ENCODE measurements at regions of chr15 and their contacts with region 1.

Region 1: DNA sequence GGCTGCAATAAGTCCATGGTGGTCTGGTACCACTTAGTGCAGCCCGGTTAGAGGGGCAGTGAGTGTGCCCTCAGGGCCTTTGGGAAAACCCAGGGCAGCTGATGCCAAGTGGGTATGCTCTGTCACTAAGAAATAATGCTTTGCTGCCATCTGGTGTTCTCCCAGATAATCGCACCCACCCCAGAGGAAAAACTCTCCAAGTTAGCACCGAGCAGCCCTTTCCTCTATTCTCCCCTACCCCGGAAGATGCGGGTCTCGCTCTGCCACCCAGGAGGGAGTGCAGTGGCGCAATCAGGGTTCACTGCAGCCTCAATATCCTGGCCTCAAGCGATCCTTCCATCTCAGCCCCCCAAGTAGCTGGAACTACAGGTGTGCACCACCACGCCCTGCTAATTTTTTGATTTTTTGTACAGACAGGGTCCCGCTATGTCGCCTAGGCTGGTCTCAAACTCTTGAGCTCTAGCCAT is 21.3 kb upstream of the DAPK2 start:
- DNase-seq: peak; percentile 64
- H3K4me3 ChIP-seq: no peak overlapping the region
- H3K27ac ChIP-seq: no peak overlapping the region
- H3K4me1 ChIP-seq: peaks cover 17% of the 10 kb centered on the region
- H3K27me3 ChIP-seq: no peaks in the 10 kb centered on the region
- CTCF ChIP-seq: peak; percentile 63 to 81
- POLR2A ChIP-seq: no peak

Region 2: GRCh38 chr15:63610200-63610841 is 457.3 kb before region 1 on chr15:
- CTCF ChIA-PET with region 1: interaction called, 72 read pairs
- POLR2A ChIA-PET with region 1: no interaction called
- dilution Hi-C with region 1: no loop called
- intact Hi-C with region 1: loop called (anchors 1 kb)
- DNase-seq: peak; percentile 85
- H3K4me3 ChIP-seq: no peak overlapping the region
- H3K27ac ChIP-seq: peak overlapping the region; percentile 18
- H3K4me1 ChIP-seq: peaks cover 18% of the 10 kb centered on the region
- H3K27me3 ChIP-seq: no peaks in the 10 kb centered on the region
- CTCF ChIP-seq: peak; percentile 70 to 73
- POLR2A ChIP-seq: no peak

Region 3: GRCh38 chr15:63638839-63639238 is 428.8 kb before region 1 on chr15:
- CTCF ChIA-PET with region 1: no interaction called
- POLR2A ChIA-PET with region 1: no interaction called
- dilution Hi-C with region 1: no loop called
- intact Hi-C with region 1: no loop called
- DNase-seq: no peak
- H3K4me3 ChIP-seq: no peak overlapping the region
- H3K27ac ChIP-seq: no peak overlapping the region
- H3K4me1 ChIP-seq: peaks cover 4% of the 10 kb centered on the region
- H3K27me3 ChIP-seq: no peaks in the 10 kb centered on the region
- CTCF ChIP-seq: no peak
- POLR2A ChIP-seq: no peak

Region 4: GRCh38 chr15:63818191-63818590 is 249.4 kb before region 1 on chr15:
- CTCF ChIA-PET with region 1: interaction called, 15 read pairs
- POLR2A ChIA-PET with region 1: no interaction called
- dilution Hi-C with region 1: no loop called
- intact Hi-C with region 1: no loop called
- DNase-seq: peak; percentile 87
- H3K4me3 ChIP-seq: no peak overlapping the region
- H3K27ac ChIP-seq: no peak overlapping the region
- H3K4me1 ChIP-seq: peaks cover 13% of the 10 kb centered on the region
- H3K27me3 ChIP-seq: no peaks in the 10 kb centered on the region
- CTCF ChIP-seq: peak; percentile 7 to 11
- POLR2A ChIP-seq: no peak

Region 5: GRCh38 chr15:63826528-63826927 is 241.1 kb before region 1 on chr15:
- CTCF ChIA-PET with region 1: interaction called, 32 read pairs
- POLR2A ChIA-PET with region 1: no interaction called
- dilution Hi-C with region 1: no loop called
- intact Hi-C with region 1: loop called (anchors 1 kb)
- DNase-seq: peak; percentile 47
- H3K4me3 ChIP-seq: no peak overlapping the region
- H3K27ac ChIP-seq: no peak overlapping the region
- H3K4me1 ChIP-seq: peaks cover 4% of the 10 kb centered on the region
- H3K27me3 ChIP-seq: no peaks in the 10 kb centered on the region
- CTCF ChIP-seq: peak in 1 of 2 donors; percentile 10
- POLR2A ChIP-seq: no peak

Region 6: DNA sequence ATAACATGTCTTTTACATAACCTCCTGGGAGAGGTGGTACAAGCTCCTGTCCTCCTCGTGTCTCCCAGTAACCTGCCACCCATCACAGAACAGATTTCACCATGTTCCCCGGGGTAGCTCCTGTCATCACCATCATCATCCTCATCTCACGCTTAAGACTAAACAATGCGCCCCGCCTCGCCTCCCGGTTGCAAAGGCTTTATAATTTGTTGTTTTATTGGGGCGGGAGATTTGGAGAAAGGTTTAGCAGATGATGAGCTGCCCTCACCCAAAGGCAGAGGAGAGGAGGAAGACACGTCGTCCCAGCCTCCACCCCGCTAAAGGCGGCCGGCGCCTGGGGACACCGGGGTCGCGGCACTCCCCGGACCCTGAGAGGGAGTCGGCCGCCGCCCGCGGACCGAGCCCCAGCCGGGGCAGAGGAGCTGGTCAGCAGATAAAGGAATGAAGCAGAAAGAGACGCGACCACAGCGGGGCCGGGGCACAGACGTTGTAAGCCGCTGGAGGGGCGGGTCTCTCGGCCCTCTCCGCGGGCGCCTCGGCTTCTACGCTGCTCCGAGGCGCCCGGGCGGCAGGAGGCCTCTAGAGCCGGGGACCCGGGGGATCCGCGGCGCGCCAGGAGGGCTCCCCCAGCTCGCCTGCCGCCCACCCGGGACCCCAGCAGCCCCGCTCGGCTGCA is 234.4 kb before region 1 on chr15:
- CTCF ChIA-PET with region 1: interaction called, 10 read pairs
- POLR2A ChIA-PET with region 1: no interaction called
- dilution Hi-C with region 1: no loop called
- intact Hi-C with region 1: no loop called
- DNase-seq: no peak
- H3K4me3 ChIP-seq: peak overlapping the region; percentile 61 to 93 (median 90)
- H3K27ac ChIP-seq: peak overlapping the region; percentile 94
- H3K4me1 ChIP-seq: peaks cover 35% of the 10 kb centered on the region
- H3K27me3 ChIP-seq: no peaks in the 10 kb centered on the region
- CTCF ChIP-seq: no peak
- POLR2A ChIP-seq: no peak

Measured in endothelial cell of umbilical vein (primary cell).